ENCODE measurements at regions of chr3 and their contacts with region 1.

Region 1: GRCh38 chr3:128787256-128788240 is 61.6 kb downstream of the RAB7A start:
- DNase-seq: no peak
- ATAC-seq: no peak

Region 2: DNA sequence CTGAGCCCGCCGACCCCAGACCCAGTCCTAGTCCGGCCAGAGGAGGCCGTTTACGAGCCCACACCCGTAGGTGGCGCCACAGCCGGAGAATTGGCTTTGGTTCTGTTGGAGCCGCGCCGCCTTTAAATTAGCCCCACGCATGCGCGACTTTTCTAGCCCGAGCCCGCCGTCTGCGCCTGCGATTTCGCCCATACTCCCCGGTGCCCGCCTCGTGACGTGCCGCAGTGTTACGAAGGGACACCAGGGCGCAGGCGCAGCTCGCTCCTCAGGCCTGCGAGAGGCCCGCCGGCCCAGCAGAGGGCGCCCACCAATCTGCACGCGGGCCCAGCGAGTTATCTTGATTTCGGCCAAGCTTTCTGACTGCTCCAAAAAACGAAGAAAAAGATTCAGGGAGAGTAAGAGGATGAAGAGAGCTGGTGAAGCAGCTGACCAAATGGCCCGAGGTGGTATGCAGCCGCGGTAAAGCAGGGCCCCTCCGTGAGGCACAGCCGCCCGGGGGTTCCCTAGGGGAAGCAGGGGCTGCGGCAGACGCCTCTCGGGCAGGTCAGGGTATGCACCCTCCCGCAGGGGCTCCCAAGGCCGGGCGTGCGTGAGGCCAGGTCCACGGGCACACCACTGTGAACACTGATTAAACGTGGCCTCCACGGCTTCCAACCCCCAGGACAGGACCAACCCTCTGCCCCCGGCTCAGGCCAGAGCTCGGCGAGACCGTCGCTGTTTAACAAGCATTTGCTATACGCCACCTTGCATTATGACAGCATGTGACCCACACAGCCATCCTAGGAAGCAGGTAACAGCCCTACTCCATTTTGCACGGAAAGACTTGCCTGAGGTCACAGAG is 169.8 kb before region 1 on chr3:
- intact Hi-C with region 1: loop called (anchors 10 kb)
- DNase-seq: peak; percentile 99
- ATAC-seq: peak; percentile 99